ENCODE measurements at regions of chr1 and their contacts with region 1.

Region 1: DNA sequence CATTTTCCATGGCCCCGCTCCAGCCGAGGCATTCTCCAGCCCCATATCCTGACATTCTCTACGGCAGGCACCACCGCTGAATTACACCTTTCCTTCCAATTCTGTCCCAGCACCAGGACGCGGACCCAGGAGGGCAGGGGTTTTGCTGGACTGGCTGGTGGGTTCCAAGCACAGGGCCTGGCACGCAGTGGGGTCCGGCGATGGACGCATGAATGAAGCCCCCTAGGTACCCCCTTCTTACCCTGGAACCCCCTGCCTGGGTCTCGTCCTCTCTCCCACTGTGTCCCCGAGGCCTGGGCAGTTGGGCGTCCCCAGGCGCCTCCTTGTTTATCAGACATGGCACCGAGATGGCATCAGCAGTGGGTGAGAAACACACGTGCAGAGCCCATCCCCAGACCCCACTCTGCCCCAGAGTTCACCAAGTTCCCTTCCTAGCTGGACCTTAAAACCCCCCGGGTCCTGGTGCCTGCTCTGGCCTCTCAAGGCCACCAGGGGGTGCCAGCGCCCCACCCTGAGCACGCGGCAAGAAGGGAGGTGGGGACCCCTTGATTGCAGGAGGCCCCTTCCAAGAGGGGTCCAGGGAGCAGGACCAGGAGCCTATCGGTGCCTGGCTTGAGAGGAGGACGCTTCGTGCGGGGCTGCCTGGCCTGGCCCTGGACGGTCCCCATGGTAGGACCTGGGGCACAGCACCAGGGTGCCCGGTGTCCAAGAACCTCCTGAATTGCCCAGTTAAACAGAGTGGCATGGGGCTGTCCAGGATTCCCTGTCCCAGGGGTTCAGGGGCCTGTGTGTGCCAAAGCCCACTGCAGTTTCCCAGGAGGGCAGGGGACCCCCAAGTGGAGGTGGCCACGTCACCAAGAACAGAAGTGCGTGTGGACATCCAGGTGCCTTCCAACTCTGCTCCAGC is 46.1 kb downstream of the MEGF6 start:
- DNase-seq: peak; percentile 38
- H3K4me3 Mint-ChIP-seq: no peak overlapping the region
- H3K27ac Mint-ChIP-seq: no peak overlapping the region
- H3K4me1 Mint-ChIP-seq: peaks cover 7% of the 10 kb centered on the region
- H3K27me3 Mint-ChIP-seq: peaks cover 11% of the 10 kb centered on the region
- CTCF ChIP-seq: peak; percentile 97

Region 2: DNA sequence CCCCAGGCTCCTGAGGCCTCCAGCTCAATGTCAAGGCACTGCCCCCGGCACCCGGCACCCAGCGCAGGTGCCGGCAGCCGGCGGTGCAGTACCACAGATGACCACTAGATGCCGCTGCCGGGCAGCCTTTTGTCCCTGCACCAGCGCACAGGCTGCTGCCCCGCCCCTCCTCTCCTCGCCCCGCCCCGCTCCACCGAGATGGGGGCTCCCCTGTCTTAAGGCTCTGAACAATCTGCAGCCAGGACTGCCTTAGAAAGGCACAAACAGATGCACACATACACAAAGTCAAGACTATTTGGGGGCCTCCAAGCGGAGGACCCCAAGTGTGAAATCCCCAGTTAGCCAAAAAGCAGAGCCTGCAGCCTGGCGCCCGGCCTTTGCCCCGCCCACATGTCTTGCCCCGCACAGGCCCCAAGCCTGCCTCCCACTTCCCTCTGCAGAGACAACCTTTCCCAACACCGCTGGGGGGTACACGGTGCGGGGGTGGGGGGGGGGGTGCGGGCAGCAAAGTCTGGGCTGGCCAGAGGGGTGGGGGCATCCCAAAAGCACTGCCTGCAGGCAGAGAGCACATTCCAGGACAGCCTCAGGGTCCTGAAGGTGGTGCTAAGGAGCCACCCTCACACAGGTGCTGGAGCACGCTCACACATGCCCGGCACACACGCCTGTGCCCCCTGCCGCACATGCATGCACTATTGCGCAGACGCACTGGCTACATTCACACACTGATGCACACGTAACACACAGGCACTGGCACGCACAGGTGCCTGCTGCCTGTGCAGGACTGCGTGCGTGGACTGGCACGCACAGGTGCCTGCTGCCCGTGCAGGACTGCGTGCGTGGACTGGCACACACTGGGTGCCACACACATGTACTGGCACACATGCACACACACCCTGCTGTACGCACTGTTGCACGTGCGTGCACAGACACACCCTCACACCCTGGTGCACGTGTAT is 73.6 kb before region 1 on chr1:
- CTCF ChIA-PET with region 1: interaction called, 7 read pairs
- POLR2A ChIA-PET with region 1: no interaction called
- intact Hi-C with region 1: loop called (anchors 10 kb)
- DNase-seq: peak; percentile 66
- H3K4me3 Mint-ChIP-seq: no peak overlapping the region
- H3K27ac Mint-ChIP-seq: no peak overlapping the region
- H3K4me1 Mint-ChIP-seq: no peaks in the 10 kb centered on the region
- H3K27me3 Mint-ChIP-seq: no peaks in the 10 kb centered on the region
- CTCF ChIP-seq: peak; percentile 99

Region 3: GRCh38 chr1:3553166-3553939 is 11.8 kb before region 1 on chr1:
- CTCF ChIA-PET with region 1: interaction called, 23 read pairs
- POLR2A ChIA-PET with region 1: no interaction called
- intact Hi-C with region 1: no loop called
- DNase-seq: peak; percentile 77
- H3K4me3 Mint-ChIP-seq: peak overlapping the region; percentile 35
- H3K27ac Mint-ChIP-seq: no peak overlapping the region
- H3K4me1 Mint-ChIP-seq: peaks cover 11% of the 10 kb centered on the region
- H3K27me3 Mint-ChIP-seq: no peaks in the 10 kb centered on the region
- CTCF ChIP-seq: no peak

Region 4: DNA sequence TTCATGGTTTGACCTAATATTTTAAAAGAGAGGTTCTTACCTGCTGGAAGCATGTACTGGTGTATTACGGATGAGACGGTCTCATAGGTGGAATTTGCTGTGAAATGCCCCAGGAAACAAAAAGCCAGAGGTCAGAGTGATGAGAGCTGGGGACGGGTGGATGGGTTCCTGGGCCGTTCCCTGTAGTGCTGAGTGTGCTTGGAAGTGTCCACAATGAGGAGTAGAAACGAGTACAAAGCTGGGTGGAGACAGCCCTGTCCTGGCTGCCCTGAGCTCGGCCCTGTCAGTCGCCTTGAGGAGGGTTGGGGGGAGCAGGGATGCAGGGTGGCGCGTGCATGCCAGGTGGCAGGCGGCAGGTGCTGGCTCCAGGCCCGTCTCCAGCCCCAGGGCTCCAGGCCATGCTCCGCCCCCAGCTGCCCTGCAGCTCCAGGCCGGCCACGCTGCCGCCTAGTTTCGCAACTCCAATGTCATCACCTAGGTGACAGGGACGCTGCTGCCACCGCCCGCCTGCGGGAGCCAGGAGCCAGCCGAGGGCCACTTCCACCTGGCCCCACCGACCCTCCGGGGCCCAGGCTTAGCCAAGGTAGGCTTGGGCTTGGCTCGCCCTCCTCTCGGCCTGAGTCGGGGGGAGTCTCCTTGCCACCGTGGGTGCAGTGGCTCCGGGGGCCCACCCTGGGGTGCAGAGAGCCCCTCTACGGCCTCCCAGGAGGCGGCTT is 103.6 kb after region 1 on chr1:
- CTCF ChIA-PET with region 1: no interaction called
- POLR2A ChIA-PET with region 1: no interaction called
- intact Hi-C with region 1: no loop called
- DNase-seq: peak; percentile 63
- H3K4me3 Mint-ChIP-seq: peak overlapping the region; percentile 15
- H3K27ac Mint-ChIP-seq: no peak overlapping the region
- H3K4me1 Mint-ChIP-seq: peaks cover 20% of the 10 kb centered on the region
- H3K27me3 Mint-ChIP-seq: no peaks in the 10 kb centered on the region
- CTCF ChIP-seq: no peak

Region 5: DNA sequence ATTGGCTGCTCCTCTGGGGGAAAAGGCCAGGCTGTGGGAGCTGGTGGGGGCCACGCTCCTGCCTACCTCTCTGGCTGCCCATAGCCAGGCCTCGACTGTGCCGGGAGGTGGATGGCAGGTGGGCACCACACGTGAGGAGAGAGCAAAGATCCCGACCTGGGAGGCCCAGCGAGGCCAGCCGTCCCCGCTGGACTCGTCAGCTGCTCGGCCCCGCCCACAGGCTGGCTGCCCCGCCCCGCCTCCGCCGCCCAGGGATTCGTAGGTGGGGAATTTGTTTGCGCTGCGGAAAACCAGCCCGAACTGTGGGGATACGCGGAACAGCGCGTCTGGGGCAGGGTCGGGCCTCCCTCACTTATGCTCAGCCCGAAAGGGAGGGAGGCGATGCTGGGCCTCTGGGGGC is 118.8 kb after region 1 on chr1:
- CTCF ChIA-PET with region 1: no interaction called
- POLR2A ChIA-PET with region 1: no interaction called
- intact Hi-C with region 1: no loop called
- DNase-seq: no peak
- H3K4me3 Mint-ChIP-seq: no peak overlapping the region
- H3K27ac Mint-ChIP-seq: no peak overlapping the region
- H3K4me1 Mint-ChIP-seq: peaks cover 10% of the 10 kb centered on the region
- H3K27me3 Mint-ChIP-seq: peaks cover 9% of the 10 kb centered on the region
- CTCF ChIP-seq: no peak

Region 6: GRCh38 chr1:3731583-3732433 is 166.6 kb after region 1 on chr1:
- CTCF ChIA-PET with region 1: no interaction called
- POLR2A ChIA-PET with region 1: no interaction called
- intact Hi-C with region 1: no loop called
- DNase-seq: no peak
- H3K4me3 Mint-ChIP-seq: no peak overlapping the region
- H3K27ac Mint-ChIP-seq: no peak overlapping the region
- H3K4me1 Mint-ChIP-seq: no peaks in the 10 kb centered on the region
- H3K27me3 Mint-ChIP-seq: no peaks in the 10 kb centered on the region
- CTCF ChIP-seq: no peak